ENCODE measurements at regions of chr12 and their contacts with region 1.

Region 1: DNA sequence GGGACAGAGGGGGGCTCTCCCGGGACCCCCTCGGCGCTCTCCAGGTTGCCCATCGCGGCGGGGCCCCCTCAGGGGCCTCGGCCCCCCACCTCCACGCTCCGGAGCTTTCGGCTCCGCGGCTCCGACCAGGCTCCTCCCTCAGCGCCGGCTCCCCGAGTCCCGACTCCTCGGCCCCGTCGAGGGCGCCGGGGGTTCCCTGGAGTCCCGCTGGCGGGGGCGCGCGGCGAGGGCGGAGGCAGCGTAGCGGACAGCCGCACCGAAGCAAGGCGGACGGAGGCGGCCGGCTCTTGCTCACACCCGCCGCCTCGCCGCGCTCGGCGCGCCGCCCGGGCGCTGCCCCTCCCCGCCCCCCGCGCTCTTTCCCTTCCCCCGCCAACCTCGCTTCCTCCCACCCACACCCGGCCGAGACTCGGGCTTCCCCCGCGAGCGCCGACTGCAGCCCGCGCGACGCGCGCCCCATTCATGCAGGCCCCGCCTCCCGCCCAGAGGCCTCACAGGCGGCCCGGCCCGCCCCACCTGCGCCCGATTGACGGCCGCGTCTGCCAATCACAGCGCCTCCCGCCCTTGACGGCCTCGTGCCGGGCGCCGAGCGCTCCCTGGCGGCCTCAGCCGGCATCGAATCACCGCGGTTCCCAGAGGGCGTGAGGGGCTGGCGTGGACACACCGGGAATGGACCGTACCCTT is at the start of gene FMNL3:
- DNase-seq: peak; percentile 99
- ATAC-seq: peak; percentile 90
- H3K4me3 Mint-ChIP-seq: peak within 1 kb of the TSS; percentile 97
- H3K27ac Mint-ChIP-seq: peak within 1 kb of the TSS; percentile 91
- H3K4me1 Mint-ChIP-seq: peaks cover 45% of the 10 kb centered on the region
- H3K27me3 Mint-ChIP-seq: peaks cover 5% of the 10 kb centered on the region
- CTCF ChIP-seq: no peak
- total RNA-seq, gene FMNL3: 74.7 and 84.3 TPM in 2 replicates

Region 2: DNA sequence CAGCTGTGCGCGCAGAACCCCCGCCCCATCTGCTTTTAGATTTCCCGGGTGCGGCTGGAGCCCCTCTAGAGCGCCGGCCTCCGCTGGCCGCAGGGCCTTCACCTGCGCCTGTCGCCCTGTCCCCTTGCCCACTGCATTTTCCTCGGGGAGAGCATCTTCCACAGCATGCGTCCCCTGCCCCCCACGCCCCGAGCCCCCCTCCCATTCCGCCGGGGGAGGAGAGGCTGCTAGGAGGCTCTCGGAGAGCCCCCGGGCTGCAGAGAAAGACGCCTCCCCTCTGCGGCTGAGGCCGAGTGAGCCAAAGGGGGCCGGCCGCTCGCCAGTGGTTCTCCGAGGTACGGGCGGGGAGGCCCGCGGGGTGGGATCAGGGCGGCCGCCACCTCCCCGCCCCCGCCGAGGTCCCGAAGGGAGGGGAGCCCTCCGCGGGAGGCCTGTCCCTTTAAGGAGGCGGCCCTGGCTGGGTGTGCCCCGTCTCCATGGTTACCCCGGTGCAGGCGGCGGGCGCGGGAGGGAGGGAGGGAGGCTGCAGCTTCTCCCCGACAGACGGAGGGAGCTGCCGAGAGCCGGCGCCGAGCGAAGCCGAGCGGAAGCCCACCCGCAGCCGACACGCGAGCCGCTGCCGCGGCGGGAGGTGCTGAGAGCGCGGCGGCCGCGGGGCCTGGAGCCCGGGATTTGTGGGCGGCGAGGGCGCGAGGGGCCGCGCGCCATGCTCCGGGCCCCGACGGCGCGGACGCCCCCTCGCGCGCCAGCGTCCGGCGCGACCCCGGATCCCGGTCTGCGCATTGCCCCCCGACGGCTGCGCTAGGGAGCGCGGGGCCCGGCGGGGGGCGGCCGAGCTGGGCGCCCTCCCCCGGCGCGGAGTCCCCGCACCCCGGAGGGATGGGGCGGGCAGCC is 168.5 kb before region 1 on chr12 and contains the start of gene KCNH3:
- CTCF ChIA-PET with region 1: no interaction called
- POLR2A ChIA-PET with region 1: no interaction called
- intact Hi-C with region 1: no loop called
- DNase-seq: peak; percentile 63
- ATAC-seq: peak; percentile 86
- H3K4me3 Mint-ChIP-seq: peak within 1 kb of the TSS; percentile 79
- H3K27ac Mint-ChIP-seq: no peak within 1 kb of the TSS
- H3K4me1 Mint-ChIP-seq: peaks cover 43% of the 10 kb centered on the region
- H3K27me3 Mint-ChIP-seq: peaks cover 28% of the 10 kb centered on the region
- CTCF ChIP-seq: no peak
- total RNA-seq, gene KCNH3: 0.27 and 0.44 TPM in 2 replicates

Region 3: GRCh38 chr12:49567611-49568441 is 139.4 kb before region 1 on chr12 and contains the start of gene MCRS1:
- CTCF ChIA-PET with region 1: no interaction called
- POLR2A ChIA-PET with region 1: no interaction called
- intact Hi-C with region 1: loop called (anchors 1 kb)
- DNase-seq: peak; percentile 80
- ATAC-seq: peak; percentile 88
- H3K4me3 Mint-ChIP-seq: peak within 1 kb of the TSS; percentile 97
- H3K27ac Mint-ChIP-seq: peak within 1 kb of the TSS; percentile 100
- H3K4me1 Mint-ChIP-seq: peaks cover 30% of the 10 kb centered on the region
- H3K27me3 Mint-ChIP-seq: no peaks in the 10 kb centered on the region
- CTCF ChIP-seq: no peak
- total RNA-seq, gene MCRS1: 82.2 and 84.2 TPM in 2 replicates

Region 4: GRCh38 chr12:49644620-49644994 is 62.7 kb before region 1 on chr12:
- CTCF ChIA-PET with region 1: interaction called, 284 read pairs
- POLR2A ChIA-PET with region 1: interaction called, 27 read pairs
- intact Hi-C with region 1: loop called (anchors 1 kb)
- DNase-seq: peak; percentile 71
- ATAC-seq: peak; percentile 92
- H3K4me3 Mint-ChIP-seq: peak overlapping the region; percentile 12
- H3K27ac Mint-ChIP-seq: peak overlapping the region; percentile 81
- H3K4me1 Mint-ChIP-seq: peaks cover 24% of the 10 kb centered on the region
- H3K27me3 Mint-ChIP-seq: no peaks in the 10 kb centered on the region
- CTCF ChIP-seq: peak; percentile 93

Region 5: DNA sequence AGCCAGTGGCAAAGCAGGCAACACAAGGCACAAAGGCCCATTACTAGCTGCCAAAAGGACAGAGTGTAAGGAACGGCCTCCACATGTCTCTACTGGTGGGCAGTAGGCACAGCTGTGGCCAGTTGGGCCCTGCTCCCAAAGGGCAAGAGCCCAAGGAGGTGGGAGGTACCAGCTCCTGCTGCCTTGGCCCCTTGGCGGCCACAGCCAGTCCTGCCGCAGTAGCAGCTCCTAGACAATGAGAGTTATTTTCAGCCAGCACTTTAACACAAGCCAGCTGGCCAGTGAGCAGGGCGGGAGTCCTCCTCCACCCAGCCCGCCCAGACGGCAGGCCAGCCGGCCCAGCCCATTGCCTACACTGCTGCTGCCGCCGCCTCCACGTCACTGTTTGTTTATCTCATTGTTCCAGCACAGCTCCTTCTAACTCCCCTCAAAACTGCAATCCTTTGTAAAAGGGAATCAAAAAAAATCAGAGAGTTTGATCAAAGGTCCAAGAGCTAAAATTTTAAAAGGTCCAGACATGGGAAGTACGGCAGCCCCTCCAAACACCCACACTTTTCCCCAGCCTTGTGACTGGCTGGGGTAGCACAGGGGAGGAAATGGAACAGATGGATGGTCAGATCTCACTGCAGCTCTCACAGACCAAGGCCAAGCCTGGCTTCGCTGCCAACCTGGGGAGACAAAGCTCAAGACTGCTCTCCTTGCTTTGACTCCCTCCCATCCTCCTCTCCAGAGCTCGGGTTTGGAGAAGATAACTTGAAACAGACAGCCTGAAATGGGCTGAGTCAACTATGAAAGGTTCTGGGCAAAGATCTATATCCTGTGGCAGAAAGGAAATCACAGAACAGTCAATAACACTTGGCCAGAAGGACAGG is 33.6 kb before region 1 on chr12:
- CTCF ChIA-PET with region 1: interaction called, 22 read pairs
- POLR2A ChIA-PET with region 1: interaction called, 265 read pairs
- intact Hi-C with region 1: loop called (anchors 1 kb)
- DNase-seq: no peak
- ATAC-seq: no peak
- H3K4me3 Mint-ChIP-seq: peak overlapping the region; percentile 52
- H3K27ac Mint-ChIP-seq: peak overlapping the region; percentile 95
- H3K4me1 Mint-ChIP-seq: peaks cover 85% of the 10 kb centered on the region
- H3K27me3 Mint-ChIP-seq: no peaks in the 10 kb centered on the region
- CTCF ChIP-seq: no peak

Region 6: DNA sequence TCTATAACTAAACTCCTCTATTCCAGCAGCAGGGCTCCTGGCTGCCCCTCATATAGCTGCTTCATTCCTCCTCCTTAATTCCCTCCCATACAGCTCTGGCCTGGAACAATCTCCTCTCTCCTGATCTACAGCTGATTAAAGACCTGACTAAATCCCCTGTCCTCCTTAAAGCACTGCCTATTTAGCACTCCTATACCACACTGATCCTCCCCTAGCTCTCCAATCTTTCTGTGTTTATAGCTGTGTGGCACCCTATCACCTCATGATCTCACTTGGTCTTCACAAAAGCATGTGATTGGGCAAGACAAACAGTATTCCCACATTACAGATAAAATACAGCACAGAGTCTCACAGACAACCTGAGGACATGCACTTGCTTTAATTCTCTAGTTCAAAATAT is 17.5 kb before region 1 on chr12:
- CTCF ChIA-PET with region 1: interaction called, 5 read pairs
- POLR2A ChIA-PET with region 1: interaction called, 8 read pairs
- intact Hi-C with region 1: loop called (anchors 1 kb)
- DNase-seq: no peak
- ATAC-seq: peak; percentile 13
- H3K4me3 Mint-ChIP-seq: no peak overlapping the region
- H3K27ac Mint-ChIP-seq: no peak overlapping the region
- H3K4me1 Mint-ChIP-seq: peaks cover 62% of the 10 kb centered on the region
- H3K27me3 Mint-ChIP-seq: no peaks in the 10 kb centered on the region
- CTCF ChIP-seq: no peak